T-cell (primary cell): ENCODE measurements at regions of chr10 and their contacts with region 1.

Region 1: DNA sequence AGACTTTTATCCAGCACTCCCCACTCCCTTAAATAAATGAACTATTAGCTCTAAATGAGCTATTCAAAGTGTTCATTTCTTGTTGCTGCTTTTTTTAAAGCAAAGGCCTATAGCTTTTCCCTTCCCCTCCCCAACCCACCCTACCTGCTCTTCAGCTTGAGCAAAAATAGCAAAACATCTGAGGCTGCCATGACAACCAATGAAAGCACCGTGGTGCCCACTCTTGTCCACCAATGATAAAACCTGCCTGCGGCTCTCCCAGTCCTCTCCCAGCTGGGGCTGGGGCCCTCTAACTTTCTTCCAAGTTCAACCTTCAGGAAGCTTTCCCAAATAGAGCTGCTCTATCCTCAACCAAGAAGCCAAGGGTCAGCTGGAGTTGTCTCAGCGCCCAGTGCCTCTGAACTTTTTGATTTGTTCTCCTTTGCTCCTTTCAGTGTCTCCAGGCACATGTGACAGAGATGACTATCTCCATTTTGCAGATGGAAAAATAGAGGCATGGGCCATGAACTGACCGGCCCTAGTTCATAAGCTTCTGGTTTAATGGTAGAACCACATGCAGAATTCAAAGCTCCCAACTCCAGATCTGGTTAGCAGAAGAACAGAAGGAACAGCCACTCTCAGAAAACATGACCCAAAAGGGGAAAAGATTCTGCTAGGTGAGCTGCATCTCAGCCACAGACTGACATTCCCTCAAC is 47.7 kb downstream of the PIK3AP1 start:
- DNase-seq: no peak
- ATAC-seq: no peak
- H3K4me3 ChIP-seq: no peak overlapping the region
- H3K4me3 Mint-ChIP-seq: no peak overlapping the region
- H3K27ac ChIP-seq: peak overlapping the region; percentile 84
- H3K27ac Mint-ChIP-seq: peak overlapping the region in 1 of 2 donors; percentile 67
- H3K4me1 ChIP-seq: peaks cover 0 to 56% of the 10 kb centered on the region in 2 experiments
- H3K4me1 Mint-ChIP-seq: peaks cover 14 to 44% (median 19%) of the 10 kb centered on the region in 3 donors
- H3K27me3 ChIP-seq: no peaks in the 10 kb centered on the region
- H3K27me3 Mint-ChIP-seq: no peaks in the 10 kb centered on the region

Region 2: GRCh38 chr10:96758423-96758822 is 85.8 kb after region 1 on chr10:
- CTCF ChIA-PET with region 1: no interaction called
- POLR2A ChIA-PET with region 1: no interaction called
- DNase-seq: peak in 1 of 35 experiments; percentile 6
- ATAC-seq: no peak
- H3K4me3 ChIP-seq: no peak overlapping the region
- H3K4me3 Mint-ChIP-seq: no peak overlapping the region
- H3K27ac ChIP-seq: no peak overlapping the region
- H3K27ac Mint-ChIP-seq: no peak overlapping the region
- H3K4me1 ChIP-seq: peaks cover 0 to 3% of the 10 kb centered on the region in 2 experiments
- H3K4me1 Mint-ChIP-seq: peaks cover 0 to 13% (median 3%) of the 10 kb centered on the region in 3 donors
- H3K27me3 ChIP-seq: peaks cover 0 to 2% of the 10 kb centered on the region in 2 experiments
- H3K27me3 Mint-ChIP-seq: peaks cover 0 to 3% of the 10 kb centered on the region in 2 donors

Region 3: GRCh38 chr10:96803318-96803664 is 130.7 kb after region 1 on chr10:
- CTCF ChIA-PET with region 1: no interaction called
- POLR2A ChIA-PET with region 1: no interaction called
- DNase-seq: no peak
- ATAC-seq: no peak
- H3K4me3 ChIP-seq: no peak overlapping the region
- H3K4me3 Mint-ChIP-seq: no peak overlapping the region
- H3K27ac ChIP-seq: no peak overlapping the region
- H3K27ac Mint-ChIP-seq: no peak overlapping the region
- H3K4me1 ChIP-seq: no peaks in the 10 kb centered on the region
- H3K4me1 Mint-ChIP-seq: no peaks in the 10 kb centered on the region
- H3K27me3 ChIP-seq: peaks cover 0 to 11% of the 10 kb centered on the region in 2 experiments
- H3K27me3 Mint-ChIP-seq: peaks cover 11 to 13% of the 10 kb centered on the region in 2 donors

Region 4: GRCh38 chr10:96820765-96821164 is 148.1 kb after region 1 on chr10:
- CTCF ChIA-PET with region 1: no interaction called
- POLR2A ChIA-PET with region 1: no interaction called
- DNase-seq: no peak
- ATAC-seq: no peak
- H3K4me3 ChIP-seq: no peak overlapping the region
- H3K4me3 Mint-ChIP-seq: no peak overlapping the region
- H3K27ac ChIP-seq: no peak overlapping the region
- H3K27ac Mint-ChIP-seq: no peak overlapping the region
- H3K4me1 ChIP-seq: no peaks in the 10 kb centered on the region
- H3K4me1 Mint-ChIP-seq: no peaks in the 10 kb centered on the region
- H3K27me3 ChIP-seq: peaks cover 0 to 7% of the 10 kb centered on the region in 2 experiments
- H3K27me3 Mint-ChIP-seq: peaks cover 0 to 4% of the 10 kb centered on the region in 2 donors

Region 5: DNA sequence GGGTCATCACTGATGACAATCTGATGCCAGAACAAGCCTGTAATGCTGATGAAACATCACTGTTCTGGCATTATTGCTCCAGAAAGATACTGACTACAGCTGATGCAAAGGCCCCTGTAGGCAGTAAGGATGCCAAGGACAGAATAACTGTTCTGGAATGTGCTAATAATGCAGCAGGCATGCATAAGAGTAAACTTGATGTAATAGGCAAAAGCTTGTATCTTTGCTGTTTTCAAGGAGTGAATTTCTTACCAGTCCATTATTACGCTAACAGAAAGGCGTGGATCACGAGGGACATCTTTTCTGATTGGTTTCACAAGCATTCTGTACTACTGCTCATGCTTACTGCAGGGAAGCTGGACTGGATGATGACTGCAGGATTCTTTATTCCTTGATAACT is 178.2 kb after region 1 on chr10:
- CTCF ChIA-PET with region 1: no interaction called
- POLR2A ChIA-PET with region 1: interaction called in 1 of 2 experiments, 12 read pairs
- DNase-seq: no peak
- ATAC-seq: no peak
- H3K4me3 ChIP-seq: no peak overlapping the region
- H3K4me3 Mint-ChIP-seq: no peak overlapping the region
- H3K27ac ChIP-seq: no peak overlapping the region
- H3K27ac Mint-ChIP-seq: no peak overlapping the region
- H3K4me1 ChIP-seq: peaks cover 0 to 9% of the 10 kb centered on the region in 2 experiments
- H3K4me1 Mint-ChIP-seq: peaks cover 65 to 73% (median 66%) of the 10 kb centered on the region in 3 donors
- H3K27me3 ChIP-seq: no peaks in the 10 kb centered on the region
- H3K27me3 Mint-ChIP-seq: no peaks in the 10 kb centered on the region